Activated CD8-positive, alpha-beta memory T cell treated with anti-CD3 and anti-CD28 coated beads, Interleukin-2, amount 10 ng/mL, durations not matched to agents 7 days and 5 days (primary cell): ENCODE measurements at regions of chr14 and their contacts with region 1.

Region 1: DNA sequence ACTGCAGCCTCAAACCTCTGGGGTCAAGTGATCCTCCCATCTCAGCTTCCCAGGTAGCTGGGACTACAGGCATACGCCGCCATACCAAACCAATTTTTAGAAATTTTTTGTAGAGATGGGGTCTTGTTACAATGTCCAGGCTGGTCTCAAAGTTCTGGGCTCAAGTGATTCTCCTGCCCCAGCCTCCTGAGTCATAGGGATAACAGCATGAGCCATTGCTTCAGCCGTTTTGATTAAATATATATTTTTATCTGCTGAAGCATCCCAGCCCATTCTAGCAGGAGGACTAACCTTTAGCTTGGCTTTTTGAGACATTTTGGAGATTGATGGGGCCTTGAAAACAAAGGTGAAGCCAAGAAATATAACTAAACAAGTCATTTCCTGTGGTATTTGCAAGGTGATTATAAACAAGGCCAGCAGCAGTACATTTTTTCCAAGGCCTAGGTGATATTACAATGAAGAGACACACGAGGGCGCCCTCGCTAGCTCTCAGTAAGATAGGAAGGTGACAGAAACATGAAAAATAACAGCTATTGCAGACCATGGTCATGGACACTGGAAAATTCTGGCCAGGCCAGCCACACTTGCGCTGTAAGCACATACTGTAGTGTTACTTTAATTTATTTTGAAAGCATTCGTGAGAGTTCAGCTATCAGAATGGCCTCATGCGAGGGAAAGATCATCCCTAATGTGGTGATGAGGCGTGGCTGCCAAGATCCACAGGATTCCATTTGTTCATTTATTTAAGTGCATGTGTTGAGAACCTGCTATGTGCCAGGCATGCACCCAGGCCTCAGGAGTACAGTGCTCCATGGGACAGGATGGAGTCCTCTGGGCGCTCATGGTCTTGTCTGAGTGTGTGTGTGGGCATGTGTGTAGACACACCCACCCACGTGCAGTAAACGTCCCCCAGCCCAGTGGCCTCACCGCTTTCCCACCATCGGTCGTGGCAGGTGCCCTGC is 63.5 kb downstream of the DGLUCY start:
- DNase-seq: peak; percentile 80
- ATAC-seq: peak; percentile 87
- H3K4me3 Mint-ChIP-seq: no peak overlapping the region
- H3K27ac Mint-ChIP-seq: peak overlapping the region; percentile 75
- H3K4me1 Mint-ChIP-seq: peaks cover 19% of the 10 kb centered on the region
- H3K27me3 Mint-ChIP-seq: no peaks in the 10 kb centered on the region

Region 2: DNA sequence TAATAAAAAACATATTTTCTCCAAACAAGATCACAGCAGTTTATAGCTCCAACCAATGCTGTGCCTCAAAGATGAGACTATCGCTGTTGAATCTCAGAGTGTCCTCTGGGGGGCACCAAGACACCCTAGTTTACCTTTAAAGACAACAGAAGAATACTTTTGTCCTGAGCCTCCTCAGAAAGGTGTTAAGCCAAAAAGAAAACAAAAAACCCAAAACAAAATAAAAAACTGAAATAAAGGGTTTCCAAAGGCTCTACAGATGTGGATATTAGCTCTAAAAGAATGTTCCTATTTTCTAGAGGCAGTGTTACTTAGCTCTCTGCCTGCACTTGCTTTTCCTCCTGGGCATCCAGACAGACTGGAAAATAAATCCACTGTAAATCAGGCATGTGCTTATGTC is 274.3 kb before region 1 on chr14:
- CTCF ChIA-PET with region 1: interaction called, 129 read pairs
- DNase-seq: peak; percentile 74
- ATAC-seq: peak; percentile 93
- H3K4me3 Mint-ChIP-seq: no peak overlapping the region
- H3K27ac Mint-ChIP-seq: peak overlapping the region; percentile 72
- H3K4me1 Mint-ChIP-seq: peaks cover 27% of the 10 kb centered on the region
- H3K27me3 Mint-ChIP-seq: no peaks in the 10 kb centered on the region

Region 3: GRCh38 chr14:91090743-91091142 is 86.6 kb before region 1 on chr14:
- CTCF ChIA-PET with region 1: no interaction called
- DNase-seq: no peak
- ATAC-seq: no peak
- H3K4me3 Mint-ChIP-seq: no peak overlapping the region
- H3K27ac Mint-ChIP-seq: no peak overlapping the region
- H3K4me1 Mint-ChIP-seq: peaks cover 22% of the 10 kb centered on the region
- H3K27me3 Mint-ChIP-seq: no peaks in the 10 kb centered on the region

Region 4: DNA sequence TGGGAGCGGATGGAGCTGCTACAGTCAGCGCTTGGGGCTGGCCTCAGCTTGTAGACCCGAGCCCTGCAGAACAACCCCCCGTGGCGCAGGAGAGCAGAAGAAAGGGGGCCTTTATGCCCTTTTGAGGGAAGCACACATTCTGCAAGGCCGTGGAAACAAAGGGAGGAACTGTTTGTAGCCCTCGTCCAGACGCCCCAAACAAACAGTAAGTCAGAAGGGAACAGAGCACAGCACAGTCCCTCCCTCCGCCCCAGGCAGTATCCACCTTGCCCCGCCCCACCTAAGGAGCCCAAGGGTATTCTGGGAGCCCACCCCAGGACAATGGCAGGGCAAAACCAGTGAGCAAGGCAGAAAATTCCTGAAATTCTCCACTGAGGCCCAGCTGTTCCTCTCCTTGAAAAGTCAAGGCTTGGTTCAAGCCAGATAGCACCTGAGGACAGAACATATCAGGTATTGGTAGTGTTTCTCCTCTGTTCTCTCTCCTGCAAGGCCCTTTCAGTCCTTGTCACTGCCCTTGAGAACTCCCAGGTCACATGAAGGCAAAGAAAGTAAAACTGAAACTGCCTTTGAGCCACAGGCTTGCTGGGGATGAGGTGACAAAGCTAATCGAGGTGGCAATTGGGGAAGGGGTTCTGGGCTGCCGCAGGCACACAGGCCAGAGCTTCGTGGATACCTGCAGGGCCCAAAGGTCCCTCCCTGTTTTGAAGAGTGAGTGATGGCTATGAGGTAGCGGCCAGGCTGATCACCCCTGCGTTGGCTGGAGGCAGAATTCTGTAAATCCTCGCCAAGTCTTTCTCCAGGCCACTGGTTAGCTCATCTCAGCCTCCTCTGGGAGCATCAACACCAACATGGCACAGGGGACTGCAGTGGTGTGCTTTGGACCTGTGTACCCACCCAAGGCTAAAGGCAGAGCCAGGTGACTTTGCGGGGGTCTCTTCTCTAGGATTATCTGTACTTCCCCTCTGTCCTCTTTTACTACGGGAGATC is 63.0 kb before region 1 on chr14:
- CTCF ChIA-PET with region 1: interaction called, 26 read pairs
- DNase-seq: peak; percentile 89
- ATAC-seq: peak; percentile 80
- H3K4me3 Mint-ChIP-seq: peak overlapping the region; percentile 98
- H3K27ac Mint-ChIP-seq: peak overlapping the region; percentile 96
- H3K4me1 Mint-ChIP-seq: peaks cover 66% of the 10 kb centered on the region
- H3K27me3 Mint-ChIP-seq: no peaks in the 10 kb centered on the region

Region 5: DNA sequence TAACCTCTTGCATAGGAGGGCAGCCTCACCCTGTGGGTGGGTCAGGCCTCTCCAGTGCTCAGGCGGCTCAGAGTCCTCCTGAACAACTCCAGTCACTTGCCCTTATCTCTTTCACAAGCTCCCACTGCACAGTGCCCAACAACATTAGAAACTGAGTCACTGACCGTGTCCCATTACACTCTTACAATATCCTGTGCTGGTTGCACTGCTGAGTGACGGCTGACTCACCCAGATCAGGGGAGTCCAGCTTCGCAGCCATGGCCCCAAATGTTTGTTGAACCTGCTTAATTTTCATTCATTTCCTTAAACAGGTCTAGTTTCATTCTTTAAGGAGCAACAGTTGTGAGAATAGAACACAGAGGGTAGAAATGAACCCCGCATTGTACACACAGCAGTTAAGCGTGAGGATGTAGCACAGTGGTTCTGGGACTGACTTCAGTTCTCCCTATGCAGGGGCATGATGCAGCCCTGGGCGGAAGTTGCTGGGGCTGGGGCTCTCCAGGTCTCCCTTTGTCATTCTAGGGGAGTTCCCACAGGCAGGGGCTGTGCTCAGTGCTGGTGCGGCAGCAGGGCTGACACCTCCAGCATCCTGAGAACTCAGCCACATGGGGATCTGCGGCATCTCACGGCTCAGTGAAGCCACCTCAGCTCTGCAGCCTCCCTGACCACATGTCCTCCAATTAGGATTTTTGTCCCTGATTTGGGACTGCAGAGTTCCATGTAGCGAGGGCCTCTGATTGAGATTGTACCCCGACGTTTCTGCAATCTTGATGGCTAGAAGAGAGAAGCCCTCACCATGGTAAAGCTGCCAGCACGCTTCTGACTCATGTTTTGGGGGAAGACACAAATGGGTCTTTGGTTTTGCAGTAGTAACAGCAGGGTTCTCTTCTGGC is 51.0 kb after region 1 on chr14:
- CTCF ChIA-PET with region 1: interaction called, 29 read pairs
- DNase-seq: peak; percentile 94
- ATAC-seq: peak; percentile 72
- H3K4me3 Mint-ChIP-seq: peak overlapping the region; percentile 59
- H3K27ac Mint-ChIP-seq: peak overlapping the region; percentile 98
- H3K4me1 Mint-ChIP-seq: peaks cover 92% of the 10 kb centered on the region
- H3K27me3 Mint-ChIP-seq: no peaks in the 10 kb centered on the region

Region 6: GRCh38 chr14:91249841-91250616 is 72.7 kb after region 1 on chr14:
- CTCF ChIA-PET with region 1: interaction called, 30 read pairs
- DNase-seq: peak; percentile 91
- ATAC-seq: peak; percentile 40
- H3K4me3 Mint-ChIP-seq: peak overlapping the region; percentile 40
- H3K27ac Mint-ChIP-seq: peak overlapping the region; percentile 100
- H3K4me1 Mint-ChIP-seq: peaks cover 91% of the 10 kb centered on the region
- H3K27me3 Mint-ChIP-seq: no peaks in the 10 kb centered on the region

Region 7: GRCh38 chr14:91281346-91281745 is 104.0 kb after region 1 on chr14:
- CTCF ChIA-PET with region 1: interaction called, 67 read pairs
- DNase-seq: no peak
- ATAC-seq: no peak
- H3K4me3 Mint-ChIP-seq: no peak overlapping the region
- H3K27ac Mint-ChIP-seq: peak overlapping the region; percentile 67
- H3K4me1 Mint-ChIP-seq: peaks cover 32% of the 10 kb centered on the region
- H3K27me3 Mint-ChIP-seq: no peaks in the 10 kb centered on the region

Region 8: DNA sequence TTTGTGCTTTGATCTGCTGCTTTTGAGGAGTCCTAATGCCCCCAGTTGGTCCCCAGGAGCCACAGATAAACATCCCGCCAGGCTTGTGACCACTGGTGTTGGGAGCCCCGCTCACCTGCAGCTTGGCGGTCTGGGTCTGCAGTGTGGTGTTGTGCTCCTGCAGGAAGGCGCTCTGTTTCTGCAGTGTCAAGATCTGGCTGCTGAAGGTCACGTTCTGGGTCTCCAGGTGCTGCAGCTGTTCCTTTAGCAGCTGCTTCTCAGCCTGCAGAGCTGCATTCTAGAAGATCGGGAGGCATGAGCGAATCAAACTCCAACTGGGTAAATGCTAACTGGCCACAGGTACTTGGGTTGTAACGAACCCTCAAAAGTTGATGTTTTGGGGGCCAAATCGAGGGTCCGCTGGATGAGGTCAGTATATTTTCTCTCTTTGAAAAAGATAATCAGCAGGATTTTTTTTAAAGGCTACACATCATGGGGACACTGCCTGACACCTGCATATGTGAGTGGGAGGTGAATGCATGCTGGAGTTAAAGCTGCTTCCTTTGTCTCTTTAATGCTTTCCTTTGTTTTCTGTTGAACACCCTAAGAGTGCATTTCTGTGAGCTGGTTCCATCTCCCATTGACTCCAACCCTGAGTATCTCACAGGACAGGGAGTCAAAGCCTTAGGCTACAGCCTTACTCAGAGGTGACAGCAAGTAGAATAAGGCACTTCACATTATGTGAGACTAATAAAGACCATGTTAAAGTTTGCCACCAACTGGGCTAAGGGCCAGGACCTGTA is 128.5 kb after region 1 on chr14:
- CTCF ChIA-PET with region 1: no interaction called
- DNase-seq: no peak
- ATAC-seq: no peak
- H3K4me3 Mint-ChIP-seq: no peak overlapping the region
- H3K27ac Mint-ChIP-seq: peak overlapping the region; percentile 44
- H3K4me1 Mint-ChIP-seq: peaks cover 49% of the 10 kb centered on the region
- H3K27me3 Mint-ChIP-seq: no peaks in the 10 kb centered on the region

Region 9: DNA sequence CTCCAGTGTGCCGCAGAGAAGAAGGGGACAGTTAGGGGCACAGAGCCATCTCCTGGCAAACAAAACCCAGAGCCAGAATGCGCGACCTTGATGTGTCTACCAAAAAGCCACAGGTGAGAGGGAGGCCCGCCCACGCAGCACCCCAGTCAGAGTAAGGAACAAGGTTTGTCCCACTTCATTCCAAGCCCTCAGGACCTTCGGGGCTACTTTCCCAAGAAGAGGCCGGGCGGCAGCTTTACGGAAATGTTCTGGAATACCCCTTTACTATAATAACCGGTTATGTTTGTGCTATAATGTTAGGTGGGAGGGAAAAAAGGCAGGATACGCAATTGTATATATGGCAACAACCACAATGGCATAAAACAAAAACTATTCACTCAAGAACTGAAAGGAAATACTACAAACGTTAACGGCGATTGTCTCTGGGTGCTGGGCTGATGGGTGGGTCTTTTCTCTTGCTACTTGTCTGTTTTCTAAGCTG is 227.9 kb after region 1 on chr14:
- CTCF ChIA-PET with region 1: no interaction called
- DNase-seq: peak; percentile 77
- ATAC-seq: peak; percentile 32
- H3K4me3 Mint-ChIP-seq: peak overlapping the region; percentile 60
- H3K27ac Mint-ChIP-seq: peak overlapping the region; percentile 88
- H3K4me1 Mint-ChIP-seq: peaks cover 91% of the 10 kb centered on the region
- H3K27me3 Mint-ChIP-seq: no peaks in the 10 kb centered on the region